CD4-positive, alpha-beta memory T cell (primary cell): ENCODE measurements at regions of chr2 and their contacts with region 1.

Region 1: GRCh38 chr2:172102391-172103278 is at the start of gene DLX2:
- DNase-seq: peak in 3 of 5 donors; percentile 52 to 60 (median 52)
- H3K4me3 ChIP-seq: peak within 1 kb of the TSS; percentile 23 to 60
- H3K4me3 Mint-ChIP-seq: peak within 1 kb of the TSS; percentile 79 to 91 (median 86)
- H3K27ac ChIP-seq: no peak within 1 kb of the TSS
- H3K27ac Mint-ChIP-seq: peak within 1 kb of the TSS in 6 of 7 donors; percentile 54 to 93 (median 86)
- H3K4me1 ChIP-seq: peaks cover 80% of the 10 kb centered on the region
- H3K4me1 Mint-ChIP-seq: peaks cover 25 to 65% (median 51%) of the 10 kb centered on the region in 4 donors
- H3K27me3 ChIP-seq: peaks cover 92% of the 10 kb centered on the region
- H3K27me3 Mint-ChIP-seq: peaks cover 57 to 59% of the 10 kb centered on the region in 2 donors
- total RNA-seq, gene DLX2: not detected

Region 2: GRCh38 chr2:171687287-171688128 is 415.1 kb before region 1 on chr2 and contains the start of gene DYNC1I2:
- CTCF ChIA-PET with region 1: interaction called, 3 read pairs
- POLR2A ChIA-PET with region 1: no interaction called
- intact Hi-C with region 1: loop called (anchors 5 kb)
- DNase-seq: peak; percentile 72 to 83 (median 79)
- H3K4me3 ChIP-seq: peak within 1 kb of the TSS; percentile 52 to 75
- H3K4me3 Mint-ChIP-seq: peak within 1 kb of the TSS; percentile 90 to 97 (median 94)
- H3K27ac ChIP-seq: peak within 1 kb of the TSS; percentile 50
- H3K27ac Mint-ChIP-seq: peak within 1 kb of the TSS; percentile 86 to 97 (median 94)
- H3K4me1 ChIP-seq: peaks cover 13% of the 10 kb centered on the region
- H3K4me1 Mint-ChIP-seq: peaks cover 20 to 31% (median 27%) of the 10 kb centered on the region in 4 donors
- H3K27me3 ChIP-seq: no peaks in the 10 kb centered on the region
- H3K27me3 Mint-ChIP-seq: no peaks in the 10 kb centered on the region
- total RNA-seq, gene DYNC1I2: 50.2 to 50.3 TPM

Region 3: DNA sequence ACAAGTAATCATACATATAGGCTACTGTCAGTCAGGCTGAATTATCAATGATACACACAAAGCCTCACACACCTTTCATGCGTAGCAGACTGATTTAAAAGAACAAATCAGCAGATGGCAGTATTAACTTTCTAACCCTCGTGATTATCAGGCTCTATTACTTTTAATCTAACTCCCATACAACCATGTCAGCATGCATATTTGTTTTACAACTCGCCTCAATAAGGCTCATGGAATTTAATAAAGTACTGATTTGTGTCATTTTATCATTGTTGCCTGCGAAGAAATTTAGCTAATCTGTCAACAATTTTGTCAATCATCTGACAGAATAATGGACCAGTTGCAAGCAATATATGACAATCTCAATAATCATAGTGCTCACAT is 291.4 kb before region 1 on chr2:
- CTCF ChIA-PET with region 1: interaction called, 11 read pairs
- POLR2A ChIA-PET with region 1: no interaction called
- intact Hi-C with region 1: loop called (anchors 1 kb)
- DNase-seq: peak in 4 of 5 donors; percentile 3 to 14 (median 8)
- H3K4me3 ChIP-seq: no peak overlapping the region
- H3K4me3 Mint-ChIP-seq: no peak overlapping the region
- H3K27ac ChIP-seq: no peak overlapping the region
- H3K27ac Mint-ChIP-seq: no peak overlapping the region
- H3K4me1 ChIP-seq: no peaks in the 10 kb centered on the region
- H3K4me1 Mint-ChIP-seq: no peaks in the 10 kb centered on the region
- H3K27me3 ChIP-seq: no peaks in the 10 kb centered on the region
- H3K27me3 Mint-ChIP-seq: no peaks in the 10 kb centered on the region

Region 4: DNA sequence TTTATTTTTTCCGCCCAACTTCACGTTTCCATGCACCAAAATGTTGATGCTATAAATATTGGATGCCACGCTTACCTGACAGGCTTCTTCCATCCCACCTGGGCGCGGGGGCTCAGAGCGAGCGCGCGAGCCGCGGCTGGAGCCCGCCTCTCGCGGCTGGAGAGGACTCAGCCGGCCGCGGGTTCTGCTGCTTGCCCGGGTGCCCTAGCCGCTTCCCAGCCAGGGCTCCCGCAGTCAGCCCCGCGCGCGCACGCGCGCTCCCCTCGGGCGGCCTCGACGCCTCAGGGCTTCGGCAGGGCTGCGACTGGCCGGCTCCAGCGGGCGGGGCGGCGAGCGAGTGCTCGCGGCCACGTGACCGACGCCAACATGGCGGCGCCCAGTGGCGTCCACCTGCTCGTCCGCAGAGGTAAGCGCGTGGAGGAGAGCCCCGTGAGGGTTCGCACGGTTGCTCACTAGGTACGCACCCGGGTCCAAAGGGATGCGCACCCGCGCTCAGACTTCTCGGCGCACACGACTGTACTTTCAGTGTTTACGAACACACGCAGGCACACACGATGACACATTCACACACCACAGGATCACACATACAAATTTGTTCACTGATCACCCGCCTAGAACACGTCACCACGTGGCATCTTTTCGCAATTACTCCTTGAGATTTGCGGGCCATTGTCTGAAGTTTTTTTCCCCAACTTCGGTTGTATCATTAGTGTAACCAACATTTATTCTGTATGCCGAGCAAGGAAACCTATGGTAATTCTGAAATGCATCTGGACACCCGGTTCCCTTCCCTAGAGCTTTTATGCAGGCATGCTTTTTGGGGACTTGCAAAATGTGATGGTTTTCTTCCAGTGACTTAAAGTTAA is 102.8 kb before region 1 on chr2 and contains the start of gene METAP1D:
- CTCF ChIA-PET with region 1: interaction called, 4 read pairs
- POLR2A ChIA-PET with region 1: interaction called, 3 read pairs
- intact Hi-C with region 1: loop called (anchors 10 kb)
- DNase-seq: peak; percentile 78 to 85 (median 83)
- H3K4me3 ChIP-seq: peak within 1 kb of the TSS; percentile 67 to 88
- H3K4me3 Mint-ChIP-seq: peak within 1 kb of the TSS; percentile 88 to 98 (median 93)
- H3K27ac ChIP-seq: peak within 1 kb of the TSS; percentile 34
- H3K27ac Mint-ChIP-seq: peak within 1 kb of the TSS; percentile 47 to 95 (median 93)
- H3K4me1 ChIP-seq: peaks cover 12% of the 10 kb centered on the region
- H3K4me1 Mint-ChIP-seq: peaks cover 8 to 20% (median 14%) of the 10 kb centered on the region in 4 donors
- H3K27me3 ChIP-seq: no peaks in the 10 kb centered on the region
- H3K27me3 Mint-ChIP-seq: peaks cover under 1 to 6% of the 10 kb centered on the region in 2 donors
- total RNA-seq, gene METAP1D: 7.2 to 7.3 TPM

Region 5: GRCh38 chr2:172555522-172556283 is 453.1 kb after region 1 on chr2 and contains the start of gene PDK1:
- CTCF ChIA-PET with region 1: no interaction called
- POLR2A ChIA-PET with region 1: interaction called, 5 read pairs
- intact Hi-C with region 1: loop called (anchors 5 kb)
- DNase-seq: peak; percentile 90 to 94 (median 93)
- H3K4me3 ChIP-seq: peak within 1 kb of the TSS; percentile 62 to 82
- H3K4me3 Mint-ChIP-seq: peak within 1 kb of the TSS; percentile 90 to 97 (median 94)
- H3K27ac ChIP-seq: peak within 1 kb of the TSS; percentile 82
- H3K27ac Mint-ChIP-seq: peak within 1 kb of the TSS; percentile 78 to 96 (median 93)
- H3K4me1 ChIP-seq: peaks cover 31% of the 10 kb centered on the region
- H3K4me1 Mint-ChIP-seq: peaks cover 22 to 51% (median 38%) of the 10 kb centered on the region in 4 donors
- H3K27me3 ChIP-seq: no peaks in the 10 kb centered on the region
- H3K27me3 Mint-ChIP-seq: peaks cover 0 to 1% of the 10 kb centered on the region in 2 donors
- total RNA-seq, gene PDK1: 34.2 to 36.8 TPM